GM12878 (cell line): ENCODE measurements at regions of chr4 and their contacts with region 1.

Region 1: GRCh38 chr4:182925298-182925738 is 8.1 kb upstream of the DCTD start:
- DNase-seq: peak; percentile 47
- ATAC-seq: peak; percentile 100
- H3K4me3 ChIP-seq: no peak overlapping the region
- H3K27ac ChIP-seq: no peak overlapping the region
- H3K4me1 ChIP-seq: no peaks in the 10 kb centered on the region
- H3K27me3 ChIP-seq: no peaks in the 10 kb centered on the region; a peak in 1 of 4 replicates
- CTCF ChIP-seq: peak; percentile 77 to 93 (median 88)
- EP300 ChIP-seq: no peak
- POLR2A ChIP-seq: no peak
- RAD21 ChIP-seq: peak; percentile 89

Region 2: DNA sequence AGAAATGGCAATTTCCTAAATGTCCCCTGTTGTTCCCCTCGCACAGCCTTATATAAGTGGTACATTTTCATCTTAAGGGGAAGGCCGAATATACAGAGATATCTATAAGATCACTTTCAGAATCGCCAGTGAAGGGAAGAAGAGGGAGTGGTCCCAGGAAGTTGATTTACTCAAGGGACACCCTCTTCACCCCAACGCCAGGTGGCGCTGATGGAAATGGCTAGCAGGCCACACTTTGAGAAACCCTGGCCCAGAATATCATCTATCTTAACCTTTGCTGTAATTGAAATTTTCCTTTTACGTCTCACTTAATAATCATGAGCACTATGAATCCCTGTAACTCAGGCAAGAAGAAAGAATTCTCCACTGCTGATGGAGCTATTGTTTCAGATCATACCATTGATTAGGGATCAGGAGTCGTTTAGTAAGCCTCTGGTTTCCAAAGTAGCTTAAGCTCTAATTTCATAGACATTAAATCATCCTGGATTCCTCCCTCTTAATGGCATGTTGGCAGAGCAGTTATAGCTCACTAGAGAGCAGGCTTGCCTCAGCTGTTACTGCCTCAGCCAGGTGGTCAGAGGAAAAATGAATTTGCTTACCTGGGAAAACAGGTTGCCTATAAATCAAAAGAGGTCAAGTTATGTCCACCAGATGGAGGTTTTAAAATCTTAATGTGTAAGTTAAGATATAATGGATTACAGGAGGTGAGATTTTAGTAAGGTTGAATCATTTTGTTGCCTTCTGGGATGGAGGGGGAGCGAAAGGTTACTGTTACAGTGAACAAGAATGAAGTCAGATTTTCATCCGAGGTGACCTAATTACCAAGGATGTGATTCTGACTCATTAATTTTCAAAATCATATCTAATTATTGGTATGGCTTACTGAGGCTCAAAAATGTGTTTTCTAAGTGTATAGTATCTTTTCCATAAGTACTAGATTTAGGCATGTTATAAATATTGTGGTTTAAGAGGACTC is 1623.3 kb before region 1 on chr4:
- CTCF ChIA-PET with region 1: interaction called, 5 read pairs
- POLR2A ChIA-PET with region 1: no interaction called
- RAD21 ChIA-PET with region 1: no interaction called
- SMC1A ChIA-PET with region 1: interaction called, 3 read pairs
- in situ Hi-C with region 1: no loop called
- intact Hi-C with region 1: loop called (anchors 10 kb)
- DNase-seq: no peak
- ATAC-seq: peak; percentile 96
- H3K4me3 ChIP-seq: no peak overlapping the region
- H3K27ac ChIP-seq: no peak overlapping the region
- H3K4me1 ChIP-seq: no peaks in the 10 kb centered on the region
- H3K27me3 ChIP-seq: no peaks in the 10 kb centered on the region
- CTCF ChIP-seq: peak; percentile 62 to 74 (median 66)
- EP300 ChIP-seq: no peak
- POLR2A ChIP-seq: no peak
- RAD21 ChIP-seq: peak; percentile 58

Region 3: GRCh38 chr4:182492422-182492821 is 432.9 kb before region 1 on chr4:
- CTCF ChIA-PET with region 1: interaction called, 12 read pairs
- POLR2A ChIA-PET with region 1: no interaction called
- RAD21 ChIA-PET with region 1: no interaction called
- SMC1A ChIA-PET with region 1: no interaction called
- in situ Hi-C with region 1: loop called (anchors 10 kb)
- intact Hi-C with region 1: no loop called
- DNase-seq: no peak
- ATAC-seq: peak; percentile 49
- H3K4me3 ChIP-seq: no peak overlapping the region
- H3K27ac ChIP-seq: no peak overlapping the region
- H3K4me1 ChIP-seq: peaks cover 8% of the 10 kb centered on the region
- H3K27me3 ChIP-seq: no peaks in the 10 kb centered on the region
- CTCF ChIP-seq: no peak
- EP300 ChIP-seq: no peak
- POLR2A ChIP-seq: no peak
- RAD21 ChIP-seq: no peak

Region 4: DNA sequence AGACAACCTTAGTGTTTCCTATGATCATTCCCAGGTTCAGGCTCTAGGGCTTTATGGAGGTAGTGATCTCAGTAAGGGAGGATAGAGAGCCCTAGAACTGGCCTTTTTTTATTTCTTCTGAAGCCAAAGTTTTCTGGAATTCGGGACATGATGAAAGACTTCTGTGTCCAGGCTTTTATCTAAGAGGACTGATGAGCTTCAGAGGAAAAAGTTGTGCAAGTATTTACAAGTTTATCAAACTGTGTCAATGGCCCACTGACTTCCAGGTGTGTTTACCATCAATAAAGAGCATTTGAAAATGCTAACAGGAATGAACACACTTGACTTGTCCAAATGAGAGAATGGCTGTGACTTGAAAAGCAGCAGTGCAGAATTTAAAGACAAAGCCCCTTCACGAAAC is 262.8 kb before region 1 on chr4:
- CTCF ChIA-PET with region 1: no interaction called
- POLR2A ChIA-PET with region 1: no interaction called
- RAD21 ChIA-PET with region 1: no interaction called
- SMC1A ChIA-PET with region 1: no interaction called
- in situ Hi-C with region 1: no loop called
- intact Hi-C with region 1: no loop called
- DNase-seq: no peak
- ATAC-seq: no peak
- H3K4me3 ChIP-seq: no peak overlapping the region
- H3K27ac ChIP-seq: no peak overlapping the region
- H3K4me1 ChIP-seq: no peaks in the 10 kb centered on the region
- H3K27me3 ChIP-seq: no peaks in the 10 kb centered on the region; a peak in 1 of 4 replicates
- CTCF ChIP-seq: no peak
- EP300 ChIP-seq: no peak
- POLR2A ChIP-seq: no peak
- RAD21 ChIP-seq: no peak

Region 5: DNA sequence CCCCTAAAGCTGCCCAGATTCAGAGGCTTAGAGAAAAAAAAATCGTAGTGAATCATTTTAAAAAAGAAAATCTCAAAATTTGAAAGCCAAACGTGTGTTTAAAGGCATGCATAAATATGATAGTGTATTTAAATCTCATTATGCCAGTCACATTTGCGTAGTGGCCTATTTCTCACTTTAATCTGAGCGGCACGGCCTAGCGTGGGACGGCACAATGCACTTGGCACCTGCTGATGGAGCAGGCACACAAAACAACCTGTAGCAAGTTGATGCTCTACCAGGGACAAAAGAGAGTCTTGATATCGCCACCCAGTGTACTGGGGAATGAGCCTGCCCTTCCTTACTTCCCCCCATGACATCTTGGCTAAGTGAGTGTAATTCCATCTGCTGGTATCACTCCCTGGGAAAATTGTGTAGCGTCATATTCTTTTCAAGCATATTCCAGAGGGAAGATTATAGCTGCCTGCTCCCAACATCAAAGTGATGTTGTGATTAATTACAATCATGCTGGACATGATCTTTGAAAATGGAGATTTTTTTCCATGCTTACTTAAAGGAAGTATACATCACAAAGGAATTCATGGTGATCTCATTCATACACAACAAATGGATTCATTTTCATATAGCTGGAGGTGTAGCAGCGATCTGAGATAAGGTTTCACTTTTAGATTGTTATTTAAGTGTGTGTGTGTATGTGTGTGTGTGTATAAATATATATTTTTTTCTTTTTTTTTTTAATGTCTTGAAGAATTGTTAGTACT is 146.9 kb before region 1 on chr4:
- CTCF ChIA-PET with region 1: no interaction called
- POLR2A ChIA-PET with region 1: no interaction called
- RAD21 ChIA-PET with region 1: no interaction called
- SMC1A ChIA-PET with region 1: no interaction called
- in situ Hi-C with region 1: no loop called
- intact Hi-C with region 1: no loop called
- DNase-seq: no peak
- ATAC-seq: no peak
- H3K4me3 ChIP-seq: no peak overlapping the region
- H3K27ac ChIP-seq: no peak overlapping the region
- H3K4me1 ChIP-seq: no peaks in the 10 kb centered on the region
- H3K27me3 ChIP-seq: no peaks in the 10 kb centered on the region
- CTCF ChIP-seq: no peak
- EP300 ChIP-seq: no peak
- POLR2A ChIP-seq: no peak
- RAD21 ChIP-seq: no peak

Region 6: DNA sequence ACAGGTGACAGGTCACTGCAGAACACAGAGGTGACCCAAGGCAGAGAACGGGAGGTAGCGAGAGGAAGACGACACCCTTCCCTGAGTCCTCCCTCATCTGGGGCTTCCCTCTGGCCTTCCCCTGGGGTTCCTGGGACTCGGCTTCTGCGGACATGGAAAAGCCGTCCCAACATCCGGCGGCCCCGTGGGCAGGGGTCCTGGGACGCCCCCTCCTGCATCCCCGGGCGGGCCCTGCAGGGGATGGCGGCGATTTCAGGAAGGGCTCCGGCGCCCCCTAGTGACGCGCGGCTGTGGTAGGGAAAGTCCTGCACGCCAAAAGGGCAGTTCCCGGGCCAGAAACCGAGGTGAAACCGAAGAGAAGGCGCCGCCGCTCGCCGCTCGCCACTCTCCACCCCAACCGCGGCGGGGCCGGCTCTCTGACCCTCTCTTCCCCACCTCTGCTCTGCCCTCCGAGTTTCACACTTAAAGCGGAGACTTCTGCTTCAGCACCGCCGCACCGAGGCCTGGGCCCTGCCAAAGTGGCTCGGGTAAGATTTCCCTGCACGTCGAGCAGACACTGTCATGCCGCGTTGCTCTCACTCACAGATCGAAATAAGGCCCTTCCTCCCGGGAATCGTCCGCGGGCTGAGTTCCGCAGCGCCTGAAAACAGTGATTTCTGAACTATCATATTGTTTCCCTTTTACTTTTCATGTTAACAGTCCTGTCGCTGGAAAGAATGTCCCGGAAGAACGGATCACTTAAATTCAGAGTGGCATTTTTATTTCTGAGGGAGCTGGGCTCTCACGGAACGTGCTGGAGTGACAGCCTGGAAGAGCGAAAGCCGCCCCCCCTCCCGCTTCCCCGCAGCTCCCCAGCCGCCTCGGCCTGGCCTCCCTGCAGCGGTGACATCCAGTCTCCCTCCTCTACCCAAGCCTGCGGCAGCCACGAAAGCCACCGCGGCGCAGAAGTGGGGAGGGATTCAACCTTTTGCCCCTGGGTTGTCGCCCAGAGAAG is 118.8 kb before region 1 on chr4:
- CTCF ChIA-PET with region 1: interaction called, 26 read pairs
- POLR2A ChIA-PET with region 1: interaction called, 3 read pairs
- RAD21 ChIA-PET with region 1: interaction called, 8 read pairs
- SMC1A ChIA-PET with region 1: interaction called, 6 read pairs
- in situ Hi-C with region 1: no loop called
- intact Hi-C with region 1: loop called (anchors 1 kb)
- DNase-seq: no peak
- ATAC-seq: peak; percentile 76
- H3K4me3 ChIP-seq: peak overlapping the region; percentile 59; the same call in 1 of the 2 replicates
- H3K27ac ChIP-seq: 0 out of 2 replicates have a peak overlapping the region, but pooled peaks have one; percentile 34
- H3K4me1 ChIP-seq: peaks cover 24% of the 10 kb centered on the region
- H3K27me3 ChIP-seq: no peaks in the 10 kb centered on the region
- CTCF ChIP-seq: peak; percentile 73 to 87 (median 84)
- EP300 ChIP-seq: no peak
- POLR2A ChIP-seq: no peak
- RAD21 ChIP-seq: peak; percentile 81

Region 7: GRCh38 chr4:182908124-182908523 is 17.2 kb before region 1 on chr4:
- CTCF ChIA-PET with region 1: interaction called, 85 read pairs
- POLR2A ChIA-PET with region 1: no interaction called
- RAD21 ChIA-PET with region 1: interaction called, 16 read pairs
- SMC1A ChIA-PET with region 1: interaction called, 37 read pairs
- in situ Hi-C with region 1: no loop called
- intact Hi-C with region 1: no loop called
- DNase-seq: no peak
- ATAC-seq: 0 out of 3 replicates have a peak, but pooled peaks have one; percentile 12
- H3K4me3 ChIP-seq: no peak overlapping the region
- H3K27ac ChIP-seq: no peak overlapping the region
- H3K4me1 ChIP-seq: no peaks in the 10 kb centered on the region; the same call in 1 of the 2 replicates
- H3K27me3 ChIP-seq: no peaks in the 10 kb centered on the region
- CTCF ChIP-seq: no peak
- EP300 ChIP-seq: no peak
- POLR2A ChIP-seq: no peak
- RAD21 ChIP-seq: no peak

Region 8: GRCh38 chr4:183249857-183250256 is 324.5 kb after region 1 on chr4:
- CTCF ChIA-PET with region 1: interaction called, 20 read pairs
- POLR2A ChIA-PET with region 1: no interaction called
- RAD21 ChIA-PET with region 1: no interaction called
- SMC1A ChIA-PET with region 1: interaction called, 9 read pairs
- in situ Hi-C with region 1: no loop called
- intact Hi-C with region 1: no loop called
- DNase-seq: no peak
- ATAC-seq: peak; percentile 65
- H3K4me3 ChIP-seq: no peak overlapping the region
- H3K27ac ChIP-seq: no peak overlapping the region
- H3K4me1 ChIP-seq: no peaks in the 10 kb centered on the region
- H3K27me3 ChIP-seq: peaks cover 0 to 2% of the 10 kb centered on the region in 2 experiments; a peak in 1 of 4 replicates
- CTCF ChIP-seq: peak in 2 of 3 experiments; percentile 4 to 46; a peak in 2 of 6 replicates
- EP300 ChIP-seq: no peak
- POLR2A ChIP-seq: no peak
- RAD21 ChIP-seq: peak; percentile 55; the same call in 1 of the 2 replicates

Region 9: GRCh38 chr4:183261953-183262775 is 336.8 kb after region 1 on chr4:
- CTCF ChIA-PET with region 1: interaction called, 31 read pairs
- POLR2A ChIA-PET with region 1: no interaction called
- RAD21 ChIA-PET with region 1: interaction called, 12 read pairs
- SMC1A ChIA-PET with region 1: interaction called, 13 read pairs
- in situ Hi-C with region 1: no loop called
- intact Hi-C with region 1: no loop called
- DNase-seq: peak; percentile 27
- ATAC-seq: peak; percentile 97
- H3K4me3 ChIP-seq: no peak overlapping the region
- H3K27ac ChIP-seq: no peak overlapping the region
- H3K4me1 ChIP-seq: no peaks in the 10 kb centered on the region
- H3K27me3 ChIP-seq: no peaks in the 10 kb centered on the region; a peak in 1 of 4 replicates
- CTCF ChIP-seq: peak; percentile 80 to 91 (median 87)
- EP300 ChIP-seq: no peak
- POLR2A ChIP-seq: no peak
- RAD21 ChIP-seq: peak; percentile 93